B cell (primary cell): ENCODE measurements at regions of chr2 and their contacts with region 1.

Region 1: GRCh38 chr2:50492477-50492851 is 539.5 kb downstream of the NRXN1 start:
- DNase-seq: peak; percentile 59
- ATAC-seq: peak; percentile 67
- H3K4me3 ChIP-seq: no peak overlapping the region
- H3K4me3 Mint-ChIP-seq: peak overlapping the region; percentile 23
- H3K27ac ChIP-seq: no peak overlapping the region
- H3K27ac Mint-ChIP-seq: no peak overlapping the region
- H3K4me1 ChIP-seq: peaks cover 0 to 3% of the 10 kb centered on the region in 2 donors
- H3K4me1 Mint-ChIP-seq: peaks cover 7% of the 10 kb centered on the region
- H3K27me3 ChIP-seq: no peaks in the 10 kb centered on the region
- H3K27me3 Mint-ChIP-seq: no peaks in the 10 kb centered on the region
- CTCF ChIP-seq: peak; percentile 75

Region 2: DNA sequence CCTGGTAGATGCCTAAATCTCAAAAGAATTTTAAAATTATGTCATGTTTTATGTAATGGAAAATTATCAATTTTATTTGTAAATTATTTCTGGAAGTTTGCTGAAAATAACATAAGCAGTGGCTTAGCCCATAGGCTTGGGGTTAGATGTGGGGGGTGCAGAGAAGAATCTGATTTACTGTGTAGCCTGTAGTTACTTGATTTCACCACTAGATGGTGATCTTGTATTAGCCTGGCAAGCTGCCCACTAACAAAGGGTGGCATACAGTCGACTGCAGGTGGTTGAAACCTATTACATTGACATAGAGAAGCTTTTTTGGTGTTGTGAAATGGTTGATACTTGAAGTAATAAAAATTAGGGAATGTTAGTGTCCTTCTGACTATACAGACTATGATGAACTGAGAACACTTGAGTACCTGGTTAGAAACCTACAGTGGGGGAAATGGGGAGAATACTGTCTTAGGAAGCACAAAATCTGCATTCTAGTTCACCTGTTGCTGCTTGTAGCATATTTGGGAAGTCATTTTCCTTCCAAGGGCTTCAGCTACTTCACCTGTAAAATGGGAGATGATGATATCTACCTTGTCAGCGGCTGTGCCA is 1545.9 kb before region 1 on chr2:
- CTCF ChIA-PET with region 1: interaction called, 21 read pairs
- POLR2A ChIA-PET with region 1: no interaction called
- intact Hi-C with region 1: no loop called
- DNase-seq: peak; percentile 56
- ATAC-seq: peak; percentile 69
- H3K4me3 ChIP-seq: no peak overlapping the region
- H3K4me3 Mint-ChIP-seq: no peak overlapping the region
- H3K27ac ChIP-seq: no peak overlapping the region
- H3K27ac Mint-ChIP-seq: no peak overlapping the region
- H3K4me1 ChIP-seq: no peaks in the 10 kb centered on the region
- H3K4me1 Mint-ChIP-seq: peaks cover 2% of the 10 kb centered on the region
- H3K27me3 ChIP-seq: no peaks in the 10 kb centered on the region
- H3K27me3 Mint-ChIP-seq: no peaks in the 10 kb centered on the region
- CTCF ChIP-seq: peak; percentile 99

Region 3: DNA sequence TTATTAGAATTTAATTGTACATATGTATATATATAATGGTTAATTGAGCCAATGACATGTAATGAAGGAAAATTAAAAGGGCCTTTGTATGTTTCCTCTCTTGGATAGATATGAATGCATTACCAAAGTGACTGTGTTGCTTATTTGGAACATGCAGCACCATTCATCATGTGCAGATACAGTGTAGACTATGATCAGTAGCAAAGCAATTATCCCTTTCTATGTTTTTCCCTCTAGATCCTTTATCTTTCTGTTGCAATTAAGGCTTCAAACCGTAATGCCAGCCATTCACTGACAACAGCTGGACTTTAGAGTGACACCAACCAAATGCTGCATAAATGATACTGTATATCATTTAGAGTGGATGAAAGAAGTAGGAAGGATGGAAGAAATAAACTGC is 25.8 kb before region 1 on chr2:
- CTCF ChIA-PET with region 1: no interaction called
- POLR2A ChIA-PET with region 1: no interaction called
- intact Hi-C with region 1: loop called (anchors 1 kb)
- DNase-seq: no peak
- ATAC-seq: no peak
- H3K4me3 ChIP-seq: no peak overlapping the region
- H3K4me3 Mint-ChIP-seq: no peak overlapping the region
- H3K27ac ChIP-seq: no peak overlapping the region
- H3K27ac Mint-ChIP-seq: no peak overlapping the region
- H3K4me1 ChIP-seq: no peaks in the 10 kb centered on the region
- H3K4me1 Mint-ChIP-seq: no peaks in the 10 kb centered on the region
- H3K27me3 ChIP-seq: no peaks in the 10 kb centered on the region
- H3K27me3 Mint-ChIP-seq: no peaks in the 10 kb centered on the region
- CTCF ChIP-seq: no peak

Region 4: GRCh38 chr2:50476174-50476573 is 16.3 kb before region 1 on chr2:
- CTCF ChIA-PET with region 1: interaction called, 21 read pairs
- POLR2A ChIA-PET with region 1: no interaction called
- intact Hi-C with region 1: no loop called
- DNase-seq: no peak
- ATAC-seq: no peak
- H3K4me3 ChIP-seq: no peak overlapping the region
- H3K4me3 Mint-ChIP-seq: no peak overlapping the region
- H3K27ac ChIP-seq: no peak overlapping the region
- H3K27ac Mint-ChIP-seq: no peak overlapping the region
- H3K4me1 ChIP-seq: no peaks in the 10 kb centered on the region
- H3K4me1 Mint-ChIP-seq: no peaks in the 10 kb centered on the region
- H3K27me3 ChIP-seq: no peaks in the 10 kb centered on the region
- H3K27me3 Mint-ChIP-seq: no peaks in the 10 kb centered on the region
- CTCF ChIP-seq: no peak

Region 5: DNA sequence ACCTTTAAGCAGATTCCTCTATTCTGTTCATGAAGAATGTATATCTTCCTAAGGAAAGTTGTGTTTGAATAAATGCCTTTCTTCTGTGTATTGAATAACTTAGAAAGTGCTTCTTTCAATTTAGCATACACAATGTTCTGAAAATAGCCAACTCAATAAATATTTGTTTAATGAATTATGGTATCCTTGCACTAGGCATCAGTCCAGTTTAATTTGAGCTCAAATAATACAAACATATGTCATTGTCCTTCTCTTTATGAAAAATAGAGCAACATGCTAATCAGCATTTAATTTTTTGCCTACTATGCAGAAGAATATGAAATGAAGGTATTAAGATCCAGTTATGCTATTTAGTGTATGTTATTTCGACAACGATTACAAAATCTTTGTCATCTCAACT is 471.3 kb after region 1 on chr2:
- CTCF ChIA-PET with region 1: no interaction called
- POLR2A ChIA-PET with region 1: no interaction called
- intact Hi-C with region 1: no loop called
- DNase-seq: no peak
- ATAC-seq: no peak
- H3K4me3 ChIP-seq: no peak overlapping the region
- H3K4me3 Mint-ChIP-seq: no peak overlapping the region
- H3K27ac ChIP-seq: no peak overlapping the region
- H3K27ac Mint-ChIP-seq: no peak overlapping the region
- H3K4me1 ChIP-seq: no peaks in the 10 kb centered on the region
- H3K4me1 Mint-ChIP-seq: no peaks in the 10 kb centered on the region
- H3K27me3 ChIP-seq: no peaks in the 10 kb centered on the region
- H3K27me3 Mint-ChIP-seq: no peaks in the 10 kb centered on the region
- CTCF ChIP-seq: no peak